Activated CD8-positive, alpha-beta memory T cell treated with anti-CD3 and anti-CD28 coated beads, Interleukin-2, amount 10 ng/mL, durations not matched to agents 7 days and 5 days (primary cell): ENCODE measurements at regions of chr15 and their contacts with region 1.

Region 1: GRCh38 chr15:51162865-51163762 is 68.4 kb upstream of the TNFAIP8L3 start:
- DNase-seq: peak; percentile 78
- ATAC-seq: peak; percentile 93
- H3K4me3 Mint-ChIP-seq: no peak overlapping the region
- H3K27ac Mint-ChIP-seq: no peak overlapping the region
- H3K4me1 Mint-ChIP-seq: peaks cover 3% of the 10 kb centered on the region
- H3K27me3 Mint-ChIP-seq: peaks cover 43% of the 10 kb centered on the region

Region 2: GRCh38 chr15:51071578-51071977 is 91.5 kb before region 1 on chr15:
- CTCF ChIA-PET with region 1: no interaction called
- DNase-seq: no peak
- ATAC-seq: no peak
- H3K4me3 Mint-ChIP-seq: no peak overlapping the region
- H3K27ac Mint-ChIP-seq: peak overlapping the region; percentile 29
- H3K4me1 Mint-ChIP-seq: peaks cover 28% of the 10 kb centered on the region
- H3K27me3 Mint-ChIP-seq: peaks cover 30% of the 10 kb centered on the region

Region 3: GRCh38 chr15:51093839-51094605 is 69.1 kb before region 1 on chr15:
- CTCF ChIA-PET with region 1: no interaction called
- DNase-seq: no peak
- ATAC-seq: peak; percentile 32
- H3K4me3 Mint-ChIP-seq: peak overlapping the region; percentile 16
- H3K27ac Mint-ChIP-seq: no peak overlapping the region
- H3K4me1 Mint-ChIP-seq: peaks cover 9% of the 10 kb centered on the region
- H3K27me3 Mint-ChIP-seq: peaks cover 91% of the 10 kb centered on the region

Region 4: GRCh38 chr15:51114437-51115119 is 48.5 kb before region 1 on chr15:
- CTCF ChIA-PET with region 1: no interaction called
- DNase-seq: no peak
- ATAC-seq: no peak
- H3K4me3 Mint-ChIP-seq: no peak overlapping the region
- H3K27ac Mint-ChIP-seq: no peak overlapping the region
- H3K4me1 Mint-ChIP-seq: no peaks in the 10 kb centered on the region
- H3K27me3 Mint-ChIP-seq: peaks cover 31% of the 10 kb centered on the region

Region 5: GRCh38 chr15:51192521-51193280 is 29.6 kb after region 1 on chr15:
- CTCF ChIA-PET with region 1: interaction called, 34 read pairs
- DNase-seq: peak; percentile 84
- ATAC-seq: peak; percentile 64
- H3K4me3 Mint-ChIP-seq: no peak overlapping the region
- H3K27ac Mint-ChIP-seq: no peak overlapping the region
- H3K4me1 Mint-ChIP-seq: peaks cover 1% of the 10 kb centered on the region
- H3K27me3 Mint-ChIP-seq: peaks cover 46% of the 10 kb centered on the region

Region 6: GRCh38 chr15:51212909-51213308 is 49.8 kb after region 1 on chr15:
- CTCF ChIA-PET with region 1: no interaction called
- DNase-seq: no peak
- ATAC-seq: no peak
- H3K4me3 Mint-ChIP-seq: no peak overlapping the region
- H3K27ac Mint-ChIP-seq: no peak overlapping the region
- H3K4me1 Mint-ChIP-seq: no peaks in the 10 kb centered on the region
- H3K27me3 Mint-ChIP-seq: peaks cover 66% of the 10 kb centered on the region

Region 7: GRCh38 chr15:51281368-51281967 is 118.4 kb after region 1 on chr15:
- CTCF ChIA-PET with region 1: interaction called, 27 read pairs
- DNase-seq: peak; percentile 57
- ATAC-seq: no peak
- H3K4me3 Mint-ChIP-seq: no peak overlapping the region
- H3K27ac Mint-ChIP-seq: no peak overlapping the region
- H3K4me1 Mint-ChIP-seq: peaks cover 16% of the 10 kb centered on the region
- H3K27me3 Mint-ChIP-seq: peaks cover 35% of the 10 kb centered on the region

Region 8: GRCh38 chr15:51380999-51381795 is 218.1 kb after region 1 on chr15:
- CTCF ChIA-PET with region 1: interaction called, 22 read pairs
- DNase-seq: peak; percentile 68
- ATAC-seq: peak; percentile 82
- H3K4me3 Mint-ChIP-seq: no peak overlapping the region
- H3K27ac Mint-ChIP-seq: no peak overlapping the region
- H3K4me1 Mint-ChIP-seq: no peaks in the 10 kb centered on the region
- H3K27me3 Mint-ChIP-seq: peaks cover 24% of the 10 kb centered on the region